ENCODE measurements at regions of chrX and their contacts with region 1.

Region 1: GRCh38 chrX:120250522-120251271 is at the start of gene ZBTB33:
- DNase-seq: peak; percentile 89
- ATAC-seq: peak; percentile 99
- H3K4me3 Mint-ChIP-seq: peak within 1 kb of the TSS; percentile 92
- H3K27ac Mint-ChIP-seq: peak within 1 kb of the TSS; percentile 72; the same call in 1 of the 2 replicates
- H3K4me1 Mint-ChIP-seq: peaks cover 7% of the 10 kb centered on the region
- H3K27me3 Mint-ChIP-seq: peaks cover 24% of the 10 kb centered on the region
- CTCF ChIP-seq: peak; percentile 36
- total RNA-seq, gene ZBTB33: 12.3 to 16.2 TPM (median 12.5 TPM) in 3 replicates

Region 2: DNA sequence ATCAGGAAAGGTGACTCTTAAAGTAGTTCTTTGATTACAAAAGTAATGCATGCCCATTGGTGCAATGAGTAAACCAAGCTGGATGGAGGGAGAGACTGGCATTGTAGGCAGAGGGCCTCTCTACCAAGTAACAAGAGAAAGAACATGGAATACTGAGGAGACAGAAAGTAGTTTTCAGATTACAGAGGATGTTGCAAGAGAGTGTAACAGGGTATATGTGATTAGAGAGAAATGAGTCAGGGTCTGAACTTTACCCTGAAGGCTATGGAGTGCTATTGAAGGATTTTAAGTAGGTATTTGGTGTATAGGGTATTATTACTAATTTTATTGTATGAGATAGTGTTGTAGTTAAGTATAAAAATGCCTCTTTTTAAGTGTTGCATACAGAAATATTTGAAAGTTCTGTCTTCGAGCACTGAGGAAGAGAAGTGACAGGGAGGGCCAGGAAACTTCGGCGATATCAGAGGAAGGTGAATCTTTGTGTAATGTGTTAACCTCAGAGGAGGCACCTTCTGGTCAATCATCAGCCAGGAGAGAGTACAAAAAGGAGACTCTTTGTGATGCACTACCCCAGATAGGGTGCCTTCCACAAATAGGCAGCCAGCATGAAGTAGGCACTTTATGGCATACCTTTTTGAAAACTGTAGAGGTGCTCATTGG is 315.4 kb before region 1 on chrX:
- CTCF ChIA-PET with region 1: no interaction called
- POLR2A ChIA-PET with region 1: no interaction called
- DNase-seq: no peak
- ATAC-seq: no peak
- H3K4me3 Mint-ChIP-seq: no peak overlapping the region
- H3K27ac Mint-ChIP-seq: no peak overlapping the region
- H3K4me1 Mint-ChIP-seq: no peaks in the 10 kb centered on the region
- H3K27me3 Mint-ChIP-seq: no peaks in the 10 kb centered on the region
- CTCF ChIP-seq: no peak

Region 3: DNA sequence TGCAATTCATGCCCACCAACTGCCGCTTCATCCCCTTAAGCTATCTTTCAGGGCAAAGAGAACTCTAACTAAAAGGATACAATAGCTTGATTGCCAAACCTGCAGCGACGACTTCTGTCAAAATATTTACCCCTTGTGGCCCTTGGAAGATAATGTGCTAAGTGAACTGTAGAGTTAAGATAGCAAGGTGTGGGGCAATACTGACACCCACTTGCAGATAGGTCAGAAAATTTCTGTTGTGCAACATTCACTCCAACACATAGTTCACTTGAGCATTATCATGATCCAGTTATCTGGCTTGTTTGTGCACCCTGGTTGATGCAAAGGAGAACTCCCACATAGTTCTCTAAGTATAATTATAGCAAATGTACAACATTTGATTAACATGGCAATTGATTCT is 228.8 kb before region 1 on chrX:
- CTCF ChIA-PET with region 1: no interaction called
- POLR2A ChIA-PET with region 1: no interaction called
- DNase-seq: no peak
- ATAC-seq: no peak
- H3K4me3 Mint-ChIP-seq: no peak overlapping the region
- H3K27ac Mint-ChIP-seq: no peak overlapping the region
- H3K4me1 Mint-ChIP-seq: no peaks in the 10 kb centered on the region
- H3K27me3 Mint-ChIP-seq: peaks cover 36% of the 10 kb centered on the region
- CTCF ChIP-seq: no peak

Region 4: GRCh38 chrX:120147537-120147936 is 103.2 kb before region 1 on chrX:
- CTCF ChIA-PET with region 1: no interaction called
- POLR2A ChIA-PET with region 1: no interaction called
- DNase-seq: peak; percentile 15
- ATAC-seq: no peak
- H3K4me3 Mint-ChIP-seq: no peak overlapping the region
- H3K27ac Mint-ChIP-seq: no peak overlapping the region
- H3K4me1 Mint-ChIP-seq: peaks cover 22% of the 10 kb centered on the region
- H3K27me3 Mint-ChIP-seq: no peaks in the 10 kb centered on the region
- CTCF ChIP-seq: no peak

Region 5: DNA sequence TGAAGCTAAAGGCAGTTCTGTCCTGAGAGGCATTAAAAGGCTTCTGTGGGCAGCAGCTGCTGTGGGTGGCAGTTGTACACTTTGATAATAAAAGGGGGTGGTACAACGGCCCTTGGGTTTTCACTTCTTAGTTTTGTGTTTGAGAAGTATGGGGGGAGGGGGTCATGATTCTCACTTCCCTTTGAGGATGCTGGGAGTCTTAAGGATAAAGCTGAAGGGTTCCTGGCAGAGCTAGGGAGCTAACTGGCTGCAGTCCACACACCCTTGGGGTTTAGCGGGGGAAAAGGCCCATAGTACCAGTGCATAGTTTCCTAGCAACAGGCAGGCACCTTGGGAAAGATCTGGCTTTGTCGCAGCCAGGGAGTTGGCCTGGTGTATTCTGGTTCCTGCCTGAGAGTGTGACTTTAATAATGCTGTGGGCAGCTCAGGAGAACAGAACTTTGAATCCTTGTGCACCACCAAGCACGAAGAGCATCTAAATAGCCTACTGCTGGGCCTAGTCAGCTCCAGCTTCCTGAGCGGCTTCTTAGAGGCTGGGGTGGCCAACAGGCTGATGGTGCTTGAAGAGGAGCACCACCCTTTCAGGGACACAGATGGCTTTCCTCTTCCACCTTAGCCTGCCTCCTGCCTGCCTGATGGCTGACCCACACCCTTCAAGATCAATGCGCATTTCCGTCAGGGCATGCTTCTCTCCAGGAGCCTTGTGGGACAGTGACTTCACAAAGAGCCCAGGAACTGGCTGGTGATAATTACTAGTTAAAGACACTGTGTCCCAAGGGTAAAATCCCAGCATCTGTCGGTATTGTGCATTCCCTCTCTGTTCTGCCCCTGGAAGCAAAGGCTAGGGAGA is 12.4 kb after region 1 on chrX:
- CTCF ChIA-PET with region 1: interaction called, 17 read pairs
- POLR2A ChIA-PET with region 1: no interaction called
- DNase-seq: peak; percentile 11
- ATAC-seq: peak; percentile 77
- H3K4me3 Mint-ChIP-seq: no peak overlapping the region
- H3K27ac Mint-ChIP-seq: peak overlapping the region; percentile 58; the same call in 1 of the 2 replicates
- H3K4me1 Mint-ChIP-seq: peaks cover 30% of the 10 kb centered on the region
- H3K27me3 Mint-ChIP-seq: peaks cover 3% of the 10 kb centered on the region
- CTCF ChIP-seq: no peak

Region 6: GRCh38 chrX:120299928-120300327 is 49.2 kb after region 1 on chrX:
- CTCF ChIA-PET with region 1: interaction called, 17 read pairs
- POLR2A ChIA-PET with region 1: no interaction called
- DNase-seq: no peak
- ATAC-seq: peak; percentile 85
- H3K4me3 Mint-ChIP-seq: no peak overlapping the region
- H3K27ac Mint-ChIP-seq: no peak overlapping the region
- H3K4me1 Mint-ChIP-seq: peaks cover 18% of the 10 kb centered on the region
- H3K27me3 Mint-ChIP-seq: peaks cover 11% of the 10 kb centered on the region
- CTCF ChIP-seq: no peak

Region 7: GRCh38 chrX:120419463-120419862 is 168.8 kb after region 1 on chrX:
- CTCF ChIA-PET with region 1: no interaction called
- POLR2A ChIA-PET with region 1: no interaction called
- DNase-seq: no peak
- ATAC-seq: no peak
- H3K4me3 Mint-ChIP-seq: no peak overlapping the region
- H3K27ac Mint-ChIP-seq: no peak overlapping the region
- H3K4me1 Mint-ChIP-seq: peaks cover 5% of the 10 kb centered on the region
- H3K27me3 Mint-ChIP-seq: no peaks in the 10 kb centered on the region; the same call in 1 of the 2 replicates
- CTCF ChIP-seq: no peak